Breast epithelium (tissue), 4 donors: ENCODE measurements at regions of chr1 and their contacts with region 1.

Region 1: DNA sequence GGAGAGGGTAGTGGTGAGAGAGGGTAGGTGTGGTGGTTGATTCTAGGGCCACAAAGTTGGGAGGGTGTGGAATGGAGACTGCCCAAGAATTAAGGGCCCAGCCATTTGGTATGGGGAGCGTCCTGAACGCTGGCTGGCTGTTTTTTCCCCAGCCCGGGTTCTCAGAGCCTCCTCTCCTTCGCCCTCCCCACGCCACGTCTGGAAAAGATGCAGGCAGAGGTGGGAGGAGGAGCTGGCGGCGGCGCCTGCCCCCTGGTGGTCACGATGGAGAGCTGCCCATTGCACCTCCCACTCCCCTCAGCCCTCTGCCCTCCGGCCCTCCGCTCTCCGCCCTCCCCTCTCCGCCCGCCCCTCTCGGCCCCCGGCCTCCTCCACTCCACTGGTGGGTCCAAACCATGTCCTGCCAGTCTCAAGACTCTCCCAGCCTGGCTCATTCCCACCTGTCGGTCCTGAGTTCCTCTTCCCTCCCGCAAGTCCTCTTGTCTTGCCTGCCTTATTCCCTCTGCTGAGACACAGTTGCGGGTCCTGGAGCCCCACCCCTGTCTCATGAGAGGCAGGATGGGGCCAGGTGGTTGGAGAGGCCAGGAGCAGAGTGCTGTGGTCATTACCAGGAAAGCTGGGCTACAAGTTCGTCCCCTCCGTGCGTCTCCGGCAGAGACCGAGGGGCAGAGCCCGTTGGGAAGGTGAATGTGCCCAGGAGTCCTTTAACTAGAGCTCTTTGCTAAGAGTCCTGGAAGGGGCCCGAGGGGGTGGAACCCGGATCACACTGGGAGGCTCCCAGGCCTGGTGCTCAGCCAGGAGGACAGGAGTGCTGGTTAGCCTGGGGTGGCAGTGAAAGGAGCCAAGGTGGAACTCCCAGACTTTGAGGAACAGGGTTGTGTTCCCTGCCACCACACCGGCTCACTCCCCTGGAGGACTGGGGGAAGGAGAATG is 22.6 kb downstream of the ETNK2 start:
- DNase-seq: peak; percentile 88 to 89
- H3K4me3 ChIP-seq: peak overlapping the region in 2 of 3 donors; percentile 44 to 62
- H3K27ac ChIP-seq: peak overlapping the region; percentile 84 to 86
- H3K4me1 ChIP-seq: peaks cover 12 to 27% of the 10 kb centered on the region in 2 donors
- H3K27me3 ChIP-seq: no peaks in the 10 kb centered on the region
- CTCF ChIP-seq: peak; percentile 86 to 93 (median 90)
- POLR2A ChIP-seq: peak; percentile 17

Region 2: GRCh38 chr1:203492082-203492747 is 637.0 kb before region 1 on chr1:
- intact Hi-C with region 1: no loop called
- DNase-seq: no peak
- H3K4me3 ChIP-seq: no peak overlapping the region
- H3K27ac ChIP-seq: peak overlapping the region in 1 of 2 donors; percentile 17
- H3K4me1 ChIP-seq: no peaks in the 10 kb centered on the region
- H3K27me3 ChIP-seq: no peaks in the 10 kb centered on the region
- CTCF ChIP-seq: no peak
- POLR2A ChIP-seq: no peak

Region 3: DNA sequence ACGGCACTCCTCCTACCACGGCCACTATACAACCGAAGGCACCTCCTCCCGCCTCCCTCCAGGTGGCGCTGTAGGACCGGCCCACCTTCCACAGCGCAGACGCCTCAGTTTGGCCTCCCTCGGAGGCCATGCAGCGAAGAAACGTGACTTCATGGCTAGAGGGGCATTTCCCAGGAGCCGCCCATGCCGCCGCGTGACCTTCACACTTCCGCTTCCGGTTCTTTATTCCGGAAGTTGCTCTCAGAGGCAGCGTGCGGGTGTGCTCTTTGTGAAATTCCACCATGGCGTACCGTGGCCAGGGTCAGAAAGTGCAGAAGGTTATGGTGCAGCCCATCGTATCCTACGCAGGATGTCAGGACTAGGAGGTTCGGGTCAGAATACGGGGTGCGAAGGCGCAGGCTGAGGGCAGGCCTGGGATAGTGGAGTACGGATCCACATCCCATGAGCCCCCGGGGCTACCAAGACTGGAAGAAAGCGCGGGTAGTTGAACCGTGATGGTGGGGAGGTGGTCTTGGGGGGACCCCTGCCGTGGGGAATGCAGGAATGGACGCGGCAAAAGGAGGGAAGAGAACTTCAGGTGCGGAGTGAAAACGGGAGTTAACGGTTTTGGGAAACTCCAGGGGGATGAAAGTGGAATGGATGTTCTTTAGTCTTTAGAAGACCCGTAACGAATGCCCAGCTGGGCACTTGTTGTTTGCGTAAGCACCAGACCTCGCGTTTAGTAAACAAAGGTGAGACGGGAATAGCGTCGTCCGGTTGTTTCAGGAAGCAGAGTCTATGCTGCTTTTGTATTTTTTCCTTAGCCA is 267.6 kb before region 1 on chr1 and contains the start of gene SNRPE:
- intact Hi-C with region 1: loop called (anchors 5 kb)
- DNase-seq: peak; percentile 96
- H3K4me3 ChIP-seq: peak within 1 kb of the TSS; percentile 92 to 98 (median 97)
- H3K27ac ChIP-seq: peak within 1 kb of the TSS; percentile 82 to 87
- H3K4me1 ChIP-seq: no peaks in the 10 kb centered on the region
- H3K27me3 ChIP-seq: no peaks in the 10 kb centered on the region
- CTCF ChIP-seq: peak; percentile 94 to 98 (median 96)
- POLR2A ChIP-seq: peak; percentile 77
- total RNA-seq, gene SNRPE: 51.8 to 74.9 (median 73.4) TPM

Region 4: DNA sequence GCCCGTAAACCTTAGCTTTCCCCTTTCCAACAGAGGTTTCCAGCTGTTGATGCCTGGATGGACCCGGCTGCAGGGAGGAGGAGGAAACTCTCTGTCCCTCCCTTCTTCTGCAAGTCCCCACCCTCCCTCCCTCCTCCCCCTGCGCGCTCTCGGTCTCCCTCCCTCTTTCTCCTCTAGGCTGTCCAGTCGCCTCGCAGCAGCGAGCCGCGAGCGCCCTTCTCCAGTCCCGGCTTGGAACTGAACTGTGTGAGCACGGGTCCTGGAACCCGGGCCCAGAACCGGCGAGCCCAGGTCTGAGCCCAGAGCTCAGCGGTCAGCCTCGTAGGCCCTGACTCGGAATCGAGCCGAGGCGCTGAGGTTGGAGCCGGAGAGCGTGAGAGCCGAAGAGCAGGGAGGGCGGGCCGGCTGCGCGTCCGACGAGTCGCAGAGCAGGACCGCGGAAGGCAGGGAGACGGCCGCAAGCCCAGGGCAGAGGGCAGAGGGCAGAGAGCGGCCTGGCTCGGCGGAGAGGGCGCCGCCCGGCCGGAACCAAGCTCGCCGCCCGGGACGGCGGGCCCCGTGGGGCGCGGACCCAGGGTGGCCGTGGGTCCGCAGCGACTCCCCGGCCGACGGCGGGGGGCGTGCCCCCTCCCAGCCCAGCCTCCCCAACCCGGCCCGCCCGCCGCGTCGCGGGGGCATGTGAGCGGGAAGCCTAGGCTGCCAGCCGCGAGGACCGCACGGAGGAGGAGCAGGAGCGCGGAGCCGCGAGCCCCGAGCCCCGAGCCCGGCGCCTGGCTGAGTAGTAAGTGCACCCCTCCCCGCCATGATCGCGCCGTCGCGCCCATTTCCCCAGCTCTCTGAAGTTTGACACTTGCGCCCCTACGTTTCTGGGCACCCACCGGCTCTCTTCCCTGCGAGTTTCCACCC is 56.0 kb before region 1 on chr1 and contains the start of gene SOX13:
- intact Hi-C with region 1: loop called (anchors 5 kb)
- DNase-seq: peak; percentile 81 to 87
- H3K4me3 ChIP-seq: peak within 1 kb of the TSS; percentile 76 to 83 (median 83)
- H3K27ac ChIP-seq: peak within 1 kb of the TSS; percentile 81 to 88
- H3K4me1 ChIP-seq: no peaks in the 10 kb centered on the region
- H3K27me3 ChIP-seq: no peaks in the 10 kb centered on the region
- CTCF ChIP-seq: peak; percentile 14 to 39 (median 28)
- POLR2A ChIP-seq: peak; percentile 81
- total RNA-seq, gene SOX13: 22.9 to 34.7 (median 31.9) TPM

Region 5: GRCh38 chr1:204213668-204214662 is 84.7 kb after region 1 on chr1 and contains the start of gene GOLT1A:
- intact Hi-C with region 1: no loop called
- DNase-seq: peak; percentile 64 to 79
- H3K4me3 ChIP-seq: peak within 1 kb of the TSS in 2 of 3 donors; percentile 47 to 60
- H3K27ac ChIP-seq: peak within 1 kb of the TSS; percentile 27 to 56
- H3K4me1 ChIP-seq: no peaks in the 10 kb centered on the region
- H3K27me3 ChIP-seq: no peaks in the 10 kb centered on the region
- CTCF ChIP-seq: peak; percentile 53 to 86 (median 80)
- POLR2A ChIP-seq: no peak
- total RNA-seq, gene GOLT1A: 3.4 to 4.6 TPM in 2 of 3 donors, not detected in the other